Activated naive CD4-positive, alpha-beta T cell treated with anti-CD3 and anti-CD28 coated beads for 36 hours (primary cell): ENCODE measurements at regions of chr3 and their contacts with region 1.

Region 1: GRCh38 chr3:141553055-141553454 is 66.2 kb downstream of the RASA2 start:
- DNase-seq: peak; percentile 21
- H3K4me3 Mint-ChIP-seq: no peak overlapping the region
- H3K27ac Mint-ChIP-seq: peak overlapping the region; percentile 60
- H3K4me1 Mint-ChIP-seq: peaks cover 55% of the 10 kb centered on the region
- H3K27me3 Mint-ChIP-seq: no peaks in the 10 kb centered on the region

Region 2: GRCh38 chr3:141370065-141370533 is 183.0 kb before region 1 on chr3:
- CTCF ChIA-PET with region 1: no interaction called
- intact Hi-C with region 1: loop called (anchors 2 kb)
- DNase-seq: peak; percentile 70
- H3K4me3 Mint-ChIP-seq: no peak overlapping the region
- H3K27ac Mint-ChIP-seq: no peak overlapping the region
- H3K4me1 Mint-ChIP-seq: peaks cover 21% of the 10 kb centered on the region
- H3K27me3 Mint-ChIP-seq: no peaks in the 10 kb centered on the region

Region 3: DNA sequence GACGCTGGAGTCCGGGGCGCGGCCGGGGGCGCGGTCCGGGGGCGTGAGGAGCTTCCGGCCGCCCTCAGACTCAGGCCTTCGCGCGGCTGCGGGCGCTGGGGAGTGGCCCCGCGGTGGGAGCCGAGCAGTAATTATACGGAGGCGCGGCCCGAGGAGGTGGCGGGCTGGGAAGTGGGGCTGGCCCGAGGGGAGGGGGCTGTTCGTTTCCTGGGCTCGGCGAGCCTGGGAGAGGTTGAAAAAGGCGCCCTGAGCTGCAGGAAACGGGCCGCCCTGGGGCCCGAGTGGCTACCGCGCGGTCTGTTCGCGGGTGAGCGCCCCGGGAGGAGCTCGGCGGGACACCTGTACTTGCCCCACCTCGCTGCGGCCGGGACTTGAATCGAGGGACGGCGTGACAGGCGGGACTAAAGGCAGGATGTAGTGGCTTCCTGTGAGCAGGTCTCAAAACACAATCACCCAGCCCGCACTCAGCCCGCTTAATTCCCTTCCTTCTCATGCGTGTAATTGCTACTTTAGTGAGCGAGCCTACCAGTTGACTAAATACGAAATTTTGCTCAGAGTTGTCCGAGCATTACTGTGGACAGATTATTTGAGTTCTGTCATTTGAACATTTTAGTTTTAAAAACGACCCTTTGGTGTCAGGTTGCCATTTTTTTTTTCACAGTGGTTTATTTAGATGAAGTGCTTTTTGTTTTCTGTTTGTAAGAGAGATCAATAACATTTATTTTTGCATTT is 65.4 kb before region 1 on chr3:
- CTCF ChIA-PET with region 1: interaction called, 6 read pairs
- intact Hi-C with region 1: loop called (anchors 1 kb)
- DNase-seq: peak; percentile 93
- H3K4me3 Mint-ChIP-seq: peak overlapping the region; percentile 87
- H3K27ac Mint-ChIP-seq: peak overlapping the region; percentile 94
- H3K4me1 Mint-ChIP-seq: peaks cover 68% of the 10 kb centered on the region
- H3K27me3 Mint-ChIP-seq: no peaks in the 10 kb centered on the region

Region 4: GRCh38 chr3:141498598-141499223 is 54.3 kb before region 1 on chr3:
- CTCF ChIA-PET with region 1: interaction called, 12 read pairs
- intact Hi-C with region 1: loop called (anchors 1 kb)
- DNase-seq: peak; percentile 94
- H3K4me3 Mint-ChIP-seq: peak overlapping the region; percentile 48
- H3K27ac Mint-ChIP-seq: peak overlapping the region; percentile 94
- H3K4me1 Mint-ChIP-seq: peaks cover 75% of the 10 kb centered on the region
- H3K27me3 Mint-ChIP-seq: no peaks in the 10 kb centered on the region

Region 5: GRCh38 chr3:141514382-141514781 is 38.7 kb before region 1 on chr3:
- CTCF ChIA-PET with region 1: interaction called, 8 read pairs
- intact Hi-C with region 1: loop called (anchors 1 kb)
- DNase-seq: no peak
- H3K4me3 Mint-ChIP-seq: no peak overlapping the region
- H3K27ac Mint-ChIP-seq: peak overlapping the region; percentile 6
- H3K4me1 Mint-ChIP-seq: peaks cover 56% of the 10 kb centered on the region
- H3K27me3 Mint-ChIP-seq: no peaks in the 10 kb centered on the region

Region 6: GRCh38 chr3:141530133-141530768 is 22.8 kb before region 1 on chr3:
- CTCF ChIA-PET with region 1: interaction called, 3 read pairs
- intact Hi-C with region 1: loop called (anchors 1 kb)
- DNase-seq: peak; percentile 23
- H3K4me3 Mint-ChIP-seq: no peak overlapping the region
- H3K27ac Mint-ChIP-seq: peak overlapping the region; percentile 35
- H3K4me1 Mint-ChIP-seq: peaks cover 71% of the 10 kb centered on the region
- H3K27me3 Mint-ChIP-seq: no peaks in the 10 kb centered on the region

Region 7: DNA sequence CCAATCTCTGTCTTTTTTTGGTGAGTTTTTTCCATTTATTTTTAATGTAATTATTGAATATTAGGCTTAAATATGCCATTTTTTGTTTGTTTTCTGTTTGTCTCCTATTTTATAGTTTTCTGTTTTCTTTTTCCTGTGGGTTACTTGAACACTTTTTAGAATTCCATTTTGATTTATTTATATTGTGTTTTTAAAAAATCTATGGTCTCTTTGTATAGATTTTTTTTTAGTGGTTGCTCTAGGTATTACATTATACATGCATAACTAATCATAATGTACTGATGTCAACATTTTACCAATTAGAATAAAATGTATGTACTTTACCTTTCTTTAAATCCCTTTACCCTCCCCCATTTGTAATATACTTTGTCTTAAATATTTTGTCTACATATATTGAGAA is 10.1 kb before region 1 on chr3:
- CTCF ChIA-PET with region 1: interaction called, 3 read pairs
- intact Hi-C with region 1: loop called (anchors 1 kb)
- DNase-seq: no peak
- H3K4me3 Mint-ChIP-seq: no peak overlapping the region
- H3K27ac Mint-ChIP-seq: no peak overlapping the region
- H3K4me1 Mint-ChIP-seq: peaks cover 66% of the 10 kb centered on the region
- H3K27me3 Mint-ChIP-seq: no peaks in the 10 kb centered on the region